GM10248 (cell line): ENCODE measurements at regions of chr3 and their contacts with region 1.

Region 1: GRCh38 chr3:57682284-57682683 is 10.6 kb downstream of the DENND6A start:
- DNase-seq: no peak
- CTCF ChIP-seq: no peak

Region 2: DNA sequence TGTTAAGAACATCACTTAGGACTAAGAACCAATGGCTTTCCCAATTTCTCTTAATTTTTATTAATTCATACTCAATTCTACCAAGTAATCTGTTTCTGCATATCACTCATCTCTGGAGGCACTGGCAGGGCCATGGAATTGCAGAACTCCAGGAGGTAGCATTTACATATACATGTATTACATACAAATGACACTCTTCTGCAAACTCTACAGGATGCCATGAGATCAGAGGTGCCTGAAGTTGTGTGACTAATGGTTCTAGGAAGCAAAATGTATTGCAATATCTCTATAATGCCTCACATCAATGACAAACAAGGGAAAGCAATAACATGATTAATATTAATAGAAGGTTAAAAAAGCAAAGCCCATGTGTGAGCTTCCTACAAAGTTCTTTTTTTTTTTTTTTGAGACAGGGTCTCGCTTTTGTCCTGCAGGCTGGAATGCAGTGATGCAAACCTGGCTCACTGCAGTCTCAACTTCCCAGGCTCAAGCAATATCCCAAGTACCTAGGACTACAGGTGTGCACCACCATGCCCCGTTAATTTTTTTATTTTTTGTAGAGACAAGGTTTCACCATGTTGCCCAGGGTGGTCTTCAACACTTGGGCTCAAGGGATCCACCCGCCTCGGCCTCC is 22.4 kb before region 1 on chr3:
- CTCF ChIA-PET with region 1: interaction called, 4 read pairs
- POLR2A ChIA-PET with region 1: interaction called, 10 read pairs
- DNase-seq: no peak
- CTCF ChIP-seq: no peak

Region 3: DNA sequence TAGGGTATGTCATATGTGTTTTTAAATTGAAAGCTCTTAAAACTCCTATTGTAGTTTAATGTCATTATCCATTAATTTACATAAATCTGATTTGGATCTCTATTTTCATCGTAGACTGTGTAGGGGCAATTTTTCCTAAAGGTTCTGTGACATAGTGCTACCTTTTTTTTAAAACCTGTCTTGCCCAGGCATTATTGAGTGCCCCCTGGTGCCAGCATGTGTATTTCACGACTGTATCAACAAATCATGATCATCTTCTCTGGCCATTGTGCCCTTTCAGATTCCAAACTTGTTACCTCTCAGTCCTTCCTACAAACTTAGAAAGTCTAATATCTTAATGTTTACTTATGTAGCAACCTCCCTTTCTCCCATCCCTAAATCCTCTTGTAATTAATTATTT is 228.7 kb after region 1 on chr3:
- CTCF ChIA-PET with region 1: no interaction called
- POLR2A ChIA-PET with region 1: no interaction called
- DNase-seq: no peak
- CTCF ChIP-seq: no peak